Endothelial cell of umbilical vein (primary cell): ENCODE measurements at regions of chr5 and their contacts with region 1.

Region 1: DNA sequence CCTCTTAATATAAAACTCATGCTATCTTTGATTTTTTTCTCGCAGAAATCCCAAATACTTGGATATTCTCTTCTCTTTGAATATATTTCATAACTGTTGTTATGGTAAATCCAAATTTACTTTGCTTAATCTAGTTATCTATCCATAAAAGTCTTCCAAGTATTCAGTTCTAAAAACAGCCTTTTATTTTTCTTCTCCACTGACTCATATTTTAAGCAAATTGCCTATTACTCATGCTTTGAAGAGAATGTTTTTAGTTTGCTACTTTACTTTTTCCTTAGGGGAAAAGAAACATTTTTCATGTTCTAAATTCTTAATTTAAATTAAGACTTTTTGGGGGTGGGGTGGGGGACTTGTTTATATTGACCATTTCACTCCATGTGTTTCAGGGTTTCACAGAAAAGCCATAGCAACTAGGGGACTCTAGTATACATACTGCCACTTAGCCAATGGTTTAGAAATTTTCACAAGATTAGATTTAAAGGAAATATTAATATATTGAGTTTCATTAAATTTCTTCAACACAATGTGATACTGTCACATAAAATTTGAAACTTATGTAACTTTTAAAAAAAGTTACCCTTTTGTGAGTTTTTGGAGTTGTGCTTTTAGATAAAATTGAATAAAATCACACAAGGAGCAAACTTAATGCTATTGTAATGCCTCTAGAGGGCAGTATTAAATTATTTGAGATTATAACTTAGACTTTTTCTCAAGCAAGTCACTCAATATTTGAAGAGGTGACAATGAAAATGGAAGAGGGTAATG is 545.8 kb upstream of the ARRDC3 start:
- DNase-seq: peak; percentile 28
- H3K4me3 ChIP-seq: no peak overlapping the region
- H3K27ac ChIP-seq: no peak overlapping the region
- H3K4me1 ChIP-seq: no peaks in the 10 kb centered on the region
- H3K27me3 ChIP-seq: no peaks in the 10 kb centered on the region
- CTCF ChIP-seq: peak in 1 of 2 donors; percentile 25
- POLR2A ChIP-seq: no peak

Region 2: DNA sequence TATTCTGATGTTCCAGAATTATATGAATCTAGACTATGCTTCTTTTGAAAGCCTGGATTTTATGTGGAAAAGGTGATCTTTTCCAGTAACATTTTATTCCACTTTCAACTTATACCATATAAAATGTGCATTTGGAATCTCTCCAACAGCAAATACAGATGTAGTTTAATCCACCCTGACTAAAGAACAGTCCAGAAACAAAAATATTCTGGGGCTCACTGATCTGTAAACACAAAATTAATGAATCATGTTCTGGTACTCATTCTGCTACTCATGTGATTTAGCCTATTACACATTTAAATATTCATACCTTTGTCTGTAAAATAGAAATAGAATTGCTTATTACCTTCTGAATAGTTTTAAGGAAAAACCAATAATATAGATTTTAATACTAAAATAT is 671.6 kb before region 1 on chr5:
- CTCF ChIA-PET with region 1: no interaction called
- POLR2A ChIA-PET with region 1: no interaction called
- dilution Hi-C with region 1: no loop called
- intact Hi-C with region 1: no loop called
- DNase-seq: no peak
- H3K4me3 ChIP-seq: no peak overlapping the region
- H3K27ac ChIP-seq: no peak overlapping the region
- H3K4me1 ChIP-seq: no peaks in the 10 kb centered on the region
- H3K27me3 ChIP-seq: no peaks in the 10 kb centered on the region
- CTCF ChIP-seq: no peak
- POLR2A ChIP-seq: no peak

Region 3: GRCh38 chr5:91499943-91500531 is 428.9 kb before region 1 on chr5:
- CTCF ChIA-PET with region 1: interaction called, 3 read pairs
- POLR2A ChIA-PET with region 1: no interaction called
- dilution Hi-C with region 1: no loop called
- intact Hi-C with region 1: loop called (anchors 5 kb)
- DNase-seq: peak; percentile 54
- H3K4me3 ChIP-seq: no peak overlapping the region
- H3K27ac ChIP-seq: no peak overlapping the region
- H3K4me1 ChIP-seq: no peaks in the 10 kb centered on the region
- H3K27me3 ChIP-seq: peaks cover 0 to 5% of the 10 kb centered on the region in 2 experiments
- CTCF ChIP-seq: peak; percentile 28 to 30
- POLR2A ChIP-seq: no peak

Region 4: GRCh38 chr5:91885291-91886265 is 43.4 kb before region 1 on chr5:
- CTCF ChIA-PET with region 1: no interaction called
- POLR2A ChIA-PET with region 1: no interaction called
- dilution Hi-C with region 1: no loop called
- intact Hi-C with region 1: no loop called
- DNase-seq: no peak
- H3K4me3 ChIP-seq: no peak overlapping the region
- H3K27ac ChIP-seq: no peak overlapping the region
- H3K4me1 ChIP-seq: no peaks in the 10 kb centered on the region
- H3K27me3 ChIP-seq: no peaks in the 10 kb centered on the region
- CTCF ChIP-seq: no peak
- POLR2A ChIP-seq: no peak

Region 5: GRCh38 chr5:93909356-93909755 is 1980.4 kb after region 1 on chr5:
- CTCF ChIA-PET with region 1: interaction called, 4 read pairs
- POLR2A ChIA-PET with region 1: no interaction called
- dilution Hi-C with region 1: no loop called
- intact Hi-C with region 1: loop called (anchors 5 kb)
- DNase-seq: peak; percentile 23
- H3K4me3 ChIP-seq: no peak overlapping the region
- H3K27ac ChIP-seq: no peak overlapping the region
- H3K4me1 ChIP-seq: no peaks in the 10 kb centered on the region
- H3K27me3 ChIP-seq: no peaks in the 10 kb centered on the region
- CTCF ChIP-seq: peak in 1 of 2 donors; percentile 7
- POLR2A ChIP-seq: no peak